ENCODE measurements at regions of chr17 and their contacts with region 1.

Region 1: GRCh38 chr17:53483704-53484103 is 339.0 kb upstream of the KIF2B start:
- DNase-seq: no peak
- ATAC-seq: no peak
- H3K4me3 ChIP-seq: no peak overlapping the region
- H3K27ac ChIP-seq: no peak overlapping the region
- H3K4me1 ChIP-seq: no peaks in the 10 kb centered on the region
- H3K27me3 ChIP-seq: no peaks in the 10 kb centered on the region
- CTCF ChIP-seq: no peak
- POLR2A ChIP-seq: no peak

Region 2: GRCh38 chr17:53420035-53420641 is 63.6 kb before region 1 on chr17:
- intact Hi-C with region 1: loop called in 1 of 10 experiments (anchors 10 kb)
- DNase-seq: no peak
- ATAC-seq: no peak
- H3K4me3 ChIP-seq: no peak overlapping the region
- H3K27ac ChIP-seq: no peak overlapping the region
- H3K4me1 ChIP-seq: no peaks in the 10 kb centered on the region
- H3K27me3 ChIP-seq: peaks cover 0 to 3% (median 0%) of the 10 kb centered on the region in 9 donors
- CTCF ChIP-seq: no peak
- POLR2A ChIP-seq: no peak

Region 3: DNA sequence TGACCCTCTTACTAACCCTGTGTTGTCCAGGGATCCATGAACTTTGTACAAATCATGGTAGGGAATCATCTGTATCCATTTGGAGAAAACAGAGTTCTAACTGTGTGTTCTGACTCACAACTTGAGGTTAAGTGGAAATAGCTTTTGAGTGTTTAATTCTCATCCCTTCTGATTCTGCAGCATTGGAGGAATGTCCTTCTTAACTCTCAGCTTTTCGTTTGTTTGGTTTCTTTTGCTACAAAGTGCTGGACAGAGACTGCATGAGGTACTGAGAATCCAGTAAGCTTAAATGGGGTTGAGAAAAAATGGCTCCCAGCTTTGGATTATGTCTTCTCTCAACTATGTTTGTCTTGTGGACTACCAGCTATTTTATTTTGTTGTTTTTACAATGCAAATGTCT is 13.1 kb before region 1 on chr17:
- intact Hi-C with region 1: loop called in 1 of 10 experiments (anchors 2 kb)
- DNase-seq: no peak
- ATAC-seq: no peak
- H3K4me3 ChIP-seq: no peak overlapping the region
- H3K27ac ChIP-seq: no peak overlapping the region
- H3K4me1 ChIP-seq: no peaks in the 10 kb centered on the region
- H3K27me3 ChIP-seq: no peaks in the 10 kb centered on the region
- CTCF ChIP-seq: no peak
- POLR2A ChIP-seq: no peak

Region 4: DNA sequence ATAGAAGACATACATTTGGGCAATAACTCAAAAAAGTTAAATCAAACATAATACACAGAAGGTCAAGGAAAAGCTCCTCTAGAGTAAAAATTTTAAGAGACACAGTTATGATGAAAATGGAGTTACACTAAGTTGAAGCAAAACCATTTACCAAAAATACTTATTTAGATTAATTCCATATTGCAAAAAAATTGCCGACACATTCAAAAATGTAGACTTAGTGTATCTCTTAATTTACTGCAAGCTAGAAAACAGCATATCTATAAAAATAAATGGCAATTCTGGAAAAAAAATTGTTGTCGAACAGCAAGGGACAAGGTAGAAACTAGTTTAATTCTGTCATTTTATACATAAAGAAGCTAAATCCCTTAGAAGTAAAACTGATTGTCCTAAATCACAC is 90.3 kb after region 1 on chr17:
- intact Hi-C with region 1: no loop called
- DNase-seq: no peak
- ATAC-seq: no peak
- H3K4me3 ChIP-seq: no peak overlapping the region
- H3K27ac ChIP-seq: no peak overlapping the region
- H3K4me1 ChIP-seq: no peaks in the 10 kb centered on the region
- H3K27me3 ChIP-seq: no peaks in the 10 kb centered on the region
- CTCF ChIP-seq: no peak
- POLR2A ChIP-seq: no peak

Measured in heart left ventricle (tissue), 16 donors.